A673 (cell line): ENCODE measurements at regions of chr3 and their contacts with region 1.

Region 1: DNA sequence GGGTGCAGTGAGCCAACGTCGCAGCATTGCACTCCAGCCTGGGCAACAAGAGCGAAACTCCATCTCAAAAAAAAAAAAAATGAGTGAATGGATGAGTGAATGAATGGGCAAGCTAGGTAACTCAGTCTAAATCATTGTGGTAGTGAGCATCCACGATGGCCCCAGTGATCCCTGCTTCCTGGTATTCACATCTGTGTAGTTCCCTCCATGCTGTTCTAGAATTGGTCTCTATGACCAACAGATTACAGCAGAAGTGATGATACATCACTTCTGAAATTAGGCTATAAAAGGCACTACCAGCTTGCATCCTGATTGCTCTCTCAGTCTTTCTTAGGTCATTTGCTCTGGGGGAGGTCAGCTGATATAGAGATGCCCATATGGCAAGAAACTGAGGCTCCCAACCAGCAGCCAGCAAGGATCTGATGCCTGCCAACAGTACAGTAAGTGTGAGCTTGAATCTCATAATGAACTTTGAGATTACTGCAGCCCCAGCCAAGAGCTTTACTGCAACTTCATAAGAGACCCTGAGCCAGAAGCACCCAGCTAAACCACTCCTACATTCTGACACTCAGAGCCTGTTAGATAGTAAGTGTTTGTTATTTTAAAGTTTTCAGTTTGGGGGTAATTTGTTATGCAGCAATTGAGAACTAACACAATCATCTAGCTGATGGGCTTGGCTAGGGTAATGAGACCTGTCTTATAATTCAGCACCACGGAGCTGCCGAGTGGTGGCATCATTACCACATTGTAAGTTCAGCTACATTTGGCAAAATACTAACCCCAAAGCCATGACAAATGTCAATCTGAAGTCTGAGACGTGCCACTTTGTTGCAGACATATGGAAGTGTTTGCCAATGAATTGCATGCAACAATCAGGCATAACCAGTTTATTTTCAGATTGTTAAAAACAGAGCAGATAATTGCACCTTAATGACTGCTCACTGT is 53.0 kb downstream of the KLHL6 start:
- DNase-seq: peak; percentile 38
- H3K4me3 ChIP-seq: no peak overlapping the region
- H3K27ac ChIP-seq: no peak overlapping the region
- H3K4me1 ChIP-seq: no peaks in the 10 kb centered on the region
- H3K27me3 ChIP-seq: no peaks in the 10 kb centered on the region
- CTCF ChIP-seq: peak; percentile 65

Region 2: GRCh38 chr3:183591881-183592521 is 89.5 kb after region 1 on chr3:
- CTCF ChIA-PET with region 1: no interaction called
- POLR2A ChIA-PET with region 1: no interaction called
- intact Hi-C with region 1: loop called (anchors 10 kb)
- DNase-seq: no peak
- H3K4me3 ChIP-seq: no peak overlapping the region
- H3K27ac ChIP-seq: no peak overlapping the region
- H3K4me1 ChIP-seq: no peaks in the 10 kb centered on the region
- H3K27me3 ChIP-seq: peaks cover 6% of the 10 kb centered on the region
- CTCF ChIP-seq: peak; percentile 58